ENCODE measurements at regions of chr20 and their contacts with region 1.

Region 1: GRCh38 chr20:9467995-9468394 is 46.4 kb upstream of the LAMP5 start:
- DNase-seq: peak; percentile 25
- ATAC-seq: peak; percentile 60
- H3K4me3 ChIP-seq: no peak overlapping the region
- H3K27ac ChIP-seq: no peak overlapping the region
- H3K4me1 ChIP-seq: no peaks in the 10 kb centered on the region
- H3K27me3 ChIP-seq: no peaks in the 10 kb centered on the region
- CTCF ChIP-seq: peak; percentile 96

Region 2: GRCh38 chr20:9485614-9486340 is 17.8 kb after region 1 on chr20:
- CTCF ChIA-PET with region 1: interaction called, 4 read pairs
- POLR2A ChIA-PET with region 1: no interaction called
- intact Hi-C with region 1: loop called (anchors 1 kb)
- DNase-seq: peak; percentile 68
- ATAC-seq: peak; percentile 88
- H3K4me3 ChIP-seq: no peak overlapping the region
- H3K27ac ChIP-seq: peak overlapping the region; percentile 44
- H3K4me1 ChIP-seq: peaks cover 18% of the 10 kb centered on the region
- H3K27me3 ChIP-seq: no peaks in the 10 kb centered on the region
- CTCF ChIP-seq: no peak

Measured in PC-3 (cell line).